Posterior cingulate gyrus (tissue), 11 donors: ENCODE measurements at regions of chr3 and their contacts with region 1.

Region 1: GRCh38 chr3:138186803-138187295 is 252 bp upstream of the ARMC8 start:
- DNase-seq: peak; percentile 85 to 98 (median 90)

Region 2: GRCh38 chr3:138300647-138301046 is 113.8 kb after region 1 on chr3:
- intact Hi-C with region 1: loop called (anchors 10 kb)
- DNase-seq: peak in 4 of 10 donors; percentile 19 to 87 (median 30)

Region 3: DNA sequence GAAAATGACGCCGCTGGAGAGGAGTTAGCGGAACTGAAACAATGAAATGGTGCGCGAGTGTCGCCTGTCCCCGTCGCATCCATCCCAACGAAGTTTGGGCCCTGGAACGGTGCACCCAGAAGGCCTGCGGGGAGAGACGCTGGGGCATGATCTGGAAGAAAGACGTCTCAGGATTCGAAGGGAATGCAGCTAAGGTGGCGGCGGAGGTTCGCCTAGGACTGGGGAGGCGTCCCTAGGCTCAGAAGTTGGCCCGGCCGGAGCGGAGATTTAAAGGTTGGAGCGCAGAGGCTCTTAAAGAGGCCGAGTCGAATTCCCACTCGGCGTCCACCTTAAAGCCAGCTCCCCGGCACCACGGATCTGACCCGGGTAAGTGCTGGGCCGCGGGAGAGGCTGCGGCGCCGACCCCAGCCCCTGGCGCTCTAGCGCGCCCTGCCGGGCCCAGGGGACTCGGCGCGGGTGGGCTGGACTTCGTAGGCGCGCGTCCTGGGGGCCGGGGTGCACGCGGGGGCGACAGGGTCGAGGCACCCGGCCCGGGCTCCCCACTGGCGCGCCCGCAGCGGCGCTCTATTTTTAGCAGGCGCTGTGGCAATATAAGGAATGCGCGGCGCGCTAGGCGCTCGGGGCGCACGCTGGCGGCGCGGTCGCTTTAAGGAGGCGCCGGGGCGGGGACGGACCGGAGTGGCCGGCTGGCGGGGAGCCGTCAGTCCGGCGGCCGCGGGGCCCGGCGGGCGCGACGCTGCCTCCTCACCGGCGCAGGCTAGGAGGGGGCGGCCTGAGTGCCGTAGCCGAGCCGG is 161.3 kb after region 1 on chr3 and contains the start of gene MRAS:
- intact Hi-C with region 1: loop called (anchors 10 kb)
- DNase-seq: peak; percentile 52 to 93 (median 68)